CD8-positive, alpha-beta T cell (primary cell): ENCODE measurements at regions of chr11 and their contacts with region 1.

Region 1: DNA sequence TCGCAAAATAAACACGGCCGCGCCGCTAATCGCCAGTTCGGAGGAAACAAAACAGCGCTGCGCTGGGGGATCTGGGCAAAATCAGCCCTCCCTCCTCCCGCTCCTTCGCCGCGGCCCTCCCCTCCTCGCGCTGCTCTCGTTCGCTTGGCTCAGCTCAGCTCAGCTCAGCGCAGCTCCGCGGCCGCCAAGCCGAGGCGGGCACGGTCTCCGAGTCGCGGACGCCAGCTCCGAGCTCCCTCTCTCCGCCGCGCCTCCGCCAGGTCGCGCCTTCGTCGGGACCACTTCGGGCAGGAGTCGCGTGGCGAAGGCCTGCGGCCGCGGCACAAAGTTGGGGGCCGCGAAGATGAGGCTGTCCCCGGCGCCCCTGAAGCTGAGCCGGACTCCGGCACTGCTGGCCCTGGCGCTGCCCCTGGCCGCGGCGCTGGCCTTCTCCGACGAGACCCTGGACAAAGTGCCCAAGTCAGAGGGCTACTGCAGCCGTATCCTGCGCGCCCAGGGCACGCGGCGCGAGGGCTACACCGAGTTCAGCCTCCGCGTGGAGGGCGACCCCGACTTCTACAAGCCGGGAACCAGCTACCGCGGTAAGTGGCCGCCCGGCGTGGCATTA is at the start of gene SPON1:
- DNase-seq: peak in 8 of 9 experiments; percentile 26 to 70 (median 52)
- ATAC-seq: peak; percentile 89
- H3K4me3 ChIP-seq: peak within 1 kb of the TSS; percentile 12 to 47
- H3K4me3 Mint-ChIP-seq: peak within 1 kb of the TSS; percentile 82
- H3K27ac ChIP-seq: no peak within 1 kb of the TSS
- H3K27ac Mint-ChIP-seq: no peak within 1 kb of the TSS
- H3K4me1 ChIP-seq: peaks cover 20% of the 10 kb centered on the region
- H3K4me1 Mint-ChIP-seq: peaks cover 13% of the 10 kb centered on the region
- H3K27me3 ChIP-seq: peaks cover 10 to 19% of the 10 kb centered on the region in 2 experiments
- H3K27me3 Mint-ChIP-seq: peaks cover 48% of the 10 kb centered on the region
- CTCF ChIP-seq: no peak
- total RNA-seq, gene SPON1: 1.4 to 2.3 TPM

Region 2: GRCh38 chr11:13861411-13861810 is 101.3 kb before region 1 on chr11:
- CTCF ChIA-PET with region 1: interaction called, 13 read pairs
- POLR2A ChIA-PET with region 1: interaction called, 3 read pairs
- intact Hi-C with region 1: no loop called
- DNase-seq: peak in 1 of 9 experiments; percentile 32
- ATAC-seq: peak; percentile 34
- H3K4me3 ChIP-seq: no peak overlapping the region
- H3K4me3 Mint-ChIP-seq: peak overlapping the region; percentile 16
- H3K27ac ChIP-seq: no peak overlapping the region
- H3K27ac Mint-ChIP-seq: peak overlapping the region; percentile 87
- H3K4me1 ChIP-seq: peaks cover 23% of the 10 kb centered on the region
- H3K4me1 Mint-ChIP-seq: peaks cover 26% of the 10 kb centered on the region
- H3K27me3 ChIP-seq: no peaks in the 10 kb centered on the region
- H3K27me3 Mint-ChIP-seq: no peaks in the 10 kb centered on the region
- CTCF ChIP-seq: no peak

Region 3: DNA sequence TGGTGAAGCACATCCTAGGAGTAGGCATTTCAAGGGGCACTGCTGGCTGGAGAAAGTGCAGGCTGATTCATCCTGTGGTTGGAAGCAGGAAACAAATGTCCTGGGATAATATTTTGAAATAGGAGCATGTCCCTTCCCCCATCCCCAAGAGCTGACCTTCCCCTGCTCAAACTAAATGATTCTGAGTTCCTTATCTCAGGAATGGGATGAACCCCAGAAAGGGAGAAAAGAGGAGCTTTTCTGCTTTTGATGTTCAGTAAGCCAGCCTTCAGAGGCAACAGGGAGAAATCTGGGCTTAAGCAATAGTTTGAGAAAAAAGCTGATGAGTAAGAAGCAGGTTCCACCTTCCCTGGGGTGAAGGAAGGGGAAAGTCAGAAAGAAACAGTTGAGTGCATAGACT is 19.7 kb before region 1 on chr11:
- CTCF ChIA-PET with region 1: interaction called, 23 read pairs
- POLR2A ChIA-PET with region 1: interaction called, 11 read pairs
- intact Hi-C with region 1: no loop called
- DNase-seq: no peak
- ATAC-seq: no peak
- H3K4me3 ChIP-seq: no peak overlapping the region
- H3K4me3 Mint-ChIP-seq: no peak overlapping the region
- H3K27ac ChIP-seq: no peak overlapping the region
- H3K27ac Mint-ChIP-seq: no peak overlapping the region
- H3K4me1 ChIP-seq: peaks cover 44% of the 10 kb centered on the region
- H3K4me1 Mint-ChIP-seq: peaks cover 57% of the 10 kb centered on the region
- H3K27me3 ChIP-seq: no peaks in the 10 kb centered on the region
- H3K27me3 Mint-ChIP-seq: no peaks in the 10 kb centered on the region
- CTCF ChIP-seq: no peak

Region 4: GRCh38 chr11:14075118-14076078 is 112.7 kb after region 1 on chr11:
- CTCF ChIA-PET with region 1: interaction called, 3 read pairs
- POLR2A ChIA-PET with region 1: no interaction called
- intact Hi-C with region 1: loop called (anchors 5 kb)
- DNase-seq: peak; percentile 27 to 84 (median 68)
- ATAC-seq: peak; percentile 88
- H3K4me3 ChIP-seq: peak overlapping the region in 1 of 2 experiments; percentile 14
- H3K4me3 Mint-ChIP-seq: peak overlapping the region; percentile 77
- H3K27ac ChIP-seq: peak overlapping the region in 1 of 2 experiments; percentile 5
- H3K27ac Mint-ChIP-seq: peak overlapping the region; percentile 88
- H3K4me1 ChIP-seq: peaks cover 60% of the 10 kb centered on the region
- H3K4me1 Mint-ChIP-seq: peaks cover 65% of the 10 kb centered on the region
- H3K27me3 ChIP-seq: no peaks in the 10 kb centered on the region
- H3K27me3 Mint-ChIP-seq: no peaks in the 10 kb centered on the region
- CTCF ChIP-seq: no peak

Region 5: GRCh38 chr11:14148653-14149273 is 186.1 kb after region 1 on chr11:
- CTCF ChIA-PET with region 1: interaction called, 144 read pairs
- POLR2A ChIA-PET with region 1: interaction called, 3 read pairs
- intact Hi-C with region 1: no loop called
- DNase-seq: peak in 2 of 9 experiments; percentile 44 to 65
- ATAC-seq: peak; percentile 94
- H3K4me3 ChIP-seq: no peak overlapping the region
- H3K4me3 Mint-ChIP-seq: no peak overlapping the region
- H3K27ac ChIP-seq: no peak overlapping the region
- H3K27ac Mint-ChIP-seq: no peak overlapping the region
- H3K4me1 ChIP-seq: no peaks in the 10 kb centered on the region
- H3K4me1 Mint-ChIP-seq: peaks cover 3% of the 10 kb centered on the region
- H3K27me3 ChIP-seq: no peaks in the 10 kb centered on the region
- H3K27me3 Mint-ChIP-seq: no peaks in the 10 kb centered on the region
- CTCF ChIP-seq: peak; percentile 75

Region 6: GRCh38 chr11:14583252-14584034 is 620.8 kb after region 1 on chr11:
- CTCF ChIA-PET with region 1: no interaction called
- POLR2A ChIA-PET with region 1: no interaction called
- intact Hi-C with region 1: no loop called
- DNase-seq: no peak
- ATAC-seq: no peak
- H3K4me3 ChIP-seq: no peak overlapping the region
- H3K4me3 Mint-ChIP-seq: no peak overlapping the region
- H3K27ac ChIP-seq: no peak overlapping the region
- H3K27ac Mint-ChIP-seq: peak overlapping the region; percentile 81
- H3K4me1 ChIP-seq: peaks cover 31% of the 10 kb centered on the region
- H3K4me1 Mint-ChIP-seq: peaks cover 76% of the 10 kb centered on the region
- H3K27me3 ChIP-seq: no peaks in the 10 kb centered on the region
- H3K27me3 Mint-ChIP-seq: no peaks in the 10 kb centered on the region
- CTCF ChIP-seq: no peak